B cell (primary cell): ENCODE measurements at regions of chr19 and their contacts with region 1.

Region 1: DNA sequence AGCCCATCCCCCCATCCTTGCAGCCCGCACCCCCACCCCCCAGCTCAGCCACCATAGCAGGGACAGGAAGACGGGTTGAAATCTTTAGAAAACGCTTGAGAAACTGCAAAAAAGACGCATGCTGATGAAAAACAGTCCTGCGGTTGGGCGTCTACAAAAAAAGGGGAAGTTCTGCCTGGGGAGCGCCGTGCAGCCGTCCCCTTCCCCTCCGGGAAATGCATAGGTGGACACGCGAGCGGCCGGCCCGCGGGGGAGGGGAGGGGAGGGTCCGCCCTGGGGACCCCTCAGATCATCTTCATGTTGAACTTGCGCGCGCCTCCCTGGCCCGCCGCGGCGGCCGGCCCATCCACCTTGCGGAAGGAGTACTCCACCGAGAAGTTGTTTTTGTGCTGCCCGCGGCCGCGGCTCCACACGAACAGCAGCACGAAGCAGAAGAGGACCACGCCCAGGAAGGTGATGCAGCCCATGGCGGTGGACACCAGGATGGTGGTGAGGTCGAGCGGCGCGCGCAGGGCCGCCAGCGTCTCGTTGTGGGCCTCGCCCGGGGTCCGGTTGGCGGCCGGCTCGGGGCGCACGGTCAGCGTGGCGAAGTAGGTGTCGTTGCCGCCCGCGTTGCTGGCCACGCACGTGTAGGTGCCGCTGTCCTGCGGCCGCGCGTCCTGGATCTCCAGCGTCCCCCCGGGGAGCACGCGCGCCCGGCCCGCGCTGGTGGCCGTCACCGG is 7.9 kb upstream of the PEAK3 start:
- DNase-seq: peak; percentile 92
- ATAC-seq: peak; percentile 69
- H3K4me3 ChIP-seq: peak overlapping the region; percentile 30 to 82 (median 71)
- H3K4me3 Mint-ChIP-seq: peak overlapping the region; percentile 97
- H3K27ac ChIP-seq: peak overlapping the region; percentile 75 to 81
- H3K27ac Mint-ChIP-seq: peak overlapping the region; percentile 87
- H3K4me1 ChIP-seq: peaks cover 46 to 62% of the 10 kb centered on the region in 2 donors
- H3K4me1 Mint-ChIP-seq: peaks cover 51% of the 10 kb centered on the region
- H3K27me3 ChIP-seq: no peaks in the 10 kb centered on the region
- H3K27me3 Mint-ChIP-seq: no peaks in the 10 kb centered on the region
- CTCF ChIP-seq: no peak

Region 2: GRCh38 chr19:2168619-2169424 is 121.1 kb before region 1 on chr19:
- CTCF ChIA-PET with region 1: no interaction called
- POLR2A ChIA-PET with region 1: interaction called, 13 read pairs
- intact Hi-C with region 1: no loop called
- DNase-seq: peak; percentile 81
- ATAC-seq: peak; percentile 44
- H3K4me3 ChIP-seq: peak overlapping the region; percentile 16 to 64 (median 37)
- H3K4me3 Mint-ChIP-seq: peak overlapping the region; percentile 88
- H3K27ac ChIP-seq: peak overlapping the region; percentile 90 to 95
- H3K27ac Mint-ChIP-seq: peak overlapping the region; percentile 95
- H3K4me1 ChIP-seq: peaks cover 66 to 88% of the 10 kb centered on the region in 2 donors
- H3K4me1 Mint-ChIP-seq: peaks cover 69% of the 10 kb centered on the region
- H3K27me3 ChIP-seq: no peaks in the 10 kb centered on the region
- H3K27me3 Mint-ChIP-seq: no peaks in the 10 kb centered on the region
- CTCF ChIP-seq: no peak

Region 3: DNA sequence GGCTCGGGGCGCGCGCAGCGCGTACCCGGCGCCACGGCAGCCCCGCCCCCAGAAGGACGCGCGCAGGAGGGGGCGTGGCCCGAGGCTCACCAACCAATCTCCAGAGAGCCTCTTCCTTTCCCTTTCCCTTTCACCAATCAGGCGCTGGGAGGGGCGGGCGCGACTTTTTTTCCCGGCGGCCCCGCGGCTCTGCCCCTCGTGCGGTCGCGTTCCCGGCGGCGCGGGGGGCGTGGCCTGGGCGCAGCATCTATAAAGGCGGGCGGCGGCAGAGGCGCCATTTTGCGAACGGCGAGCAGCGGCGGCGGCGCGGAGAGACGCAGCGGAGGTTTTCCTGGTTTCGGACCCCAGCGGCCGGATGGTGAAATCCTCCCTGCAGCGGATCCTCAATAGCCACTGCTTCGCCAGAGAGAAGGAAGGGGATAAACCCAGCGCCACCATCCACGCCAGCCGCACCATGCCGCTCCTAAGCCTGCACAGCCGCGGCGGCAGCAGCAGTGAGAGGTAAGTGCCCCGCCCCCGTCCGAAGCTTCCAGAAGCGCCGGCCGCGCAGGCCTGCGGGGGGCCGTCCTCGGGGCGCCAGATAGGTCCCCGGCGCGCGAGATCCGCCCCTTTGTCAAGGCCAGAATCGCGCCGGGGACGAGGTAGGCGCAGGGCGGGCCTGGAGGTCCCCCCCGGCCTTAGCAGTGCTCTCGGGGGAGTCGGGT is 20.5 kb before region 1 on chr19:
- CTCF ChIA-PET with region 1: interaction called, 26 read pairs
- POLR2A ChIA-PET with region 1: interaction called, 65 read pairs
- intact Hi-C with region 1: loop called (anchors 2 kb)
- DNase-seq: peak; percentile 99
- ATAC-seq: peak; percentile 66
- H3K4me3 ChIP-seq: peak overlapping the region; percentile 59 to 100 (median 99)
- H3K4me3 Mint-ChIP-seq: peak overlapping the region; percentile 89
- H3K27ac ChIP-seq: peak overlapping the region; percentile 79 to 94
- H3K27ac Mint-ChIP-seq: peak overlapping the region; percentile 97
- H3K4me1 ChIP-seq: peaks cover 56 to 66% of the 10 kb centered on the region in 2 donors
- H3K4me1 Mint-ChIP-seq: peaks cover 52% of the 10 kb centered on the region
- H3K27me3 ChIP-seq: no peaks in the 10 kb centered on the region
- H3K27me3 Mint-ChIP-seq: no peaks in the 10 kb centered on the region
- CTCF ChIP-seq: no peak

Region 4: GRCh38 chr19:2302319-2303210 is 12.7 kb after region 1 on chr19:
- CTCF ChIA-PET with region 1: interaction called, 5 read pairs
- POLR2A ChIA-PET with region 1: interaction called, 21 read pairs
- intact Hi-C with region 1: no loop called
- DNase-seq: peak; percentile 78
- ATAC-seq: peak; percentile 48
- H3K4me3 ChIP-seq: peak overlapping the region in 4 of 5 experiments; percentile 25 to 65 (median 43)
- H3K4me3 Mint-ChIP-seq: peak overlapping the region; percentile 87
- H3K27ac ChIP-seq: peak overlapping the region; percentile 64 to 78
- H3K27ac Mint-ChIP-seq: peak overlapping the region; percentile 86
- H3K4me1 ChIP-seq: peaks cover 45 to 66% of the 10 kb centered on the region in 2 donors
- H3K4me1 Mint-ChIP-seq: peaks cover 43% of the 10 kb centered on the region
- H3K27me3 ChIP-seq: peaks cover 0 to 18% (median 5%) of the 10 kb centered on the region in 4 experiments
- H3K27me3 Mint-ChIP-seq: peaks cover 4% of the 10 kb centered on the region
- CTCF ChIP-seq: no peak

Region 5: GRCh38 chr19:2328401-2329148 is 38.7 kb after region 1 on chr19 and contains the starts of genes LSM7 and SPPL2B:
- CTCF ChIA-PET with region 1: interaction called, 5 read pairs
- POLR2A ChIA-PET with region 1: interaction called, 12 read pairs
- intact Hi-C with region 1: loop called (anchors 1 kb)
- DNase-seq: peak; percentile 95
- ATAC-seq: peak; percentile 42
- H3K4me3 ChIP-seq: peak within 1 kb of the TSS; percentile 66 to 97 (median 92)
- H3K4me3 Mint-ChIP-seq: peak within 1 kb of the TSS; percentile 96
- H3K27ac ChIP-seq: peak within 1 kb of the TSS; percentile 71 to 90
- H3K27ac Mint-ChIP-seq: peak within 1 kb of the TSS; percentile 98
- H3K4me1 ChIP-seq: peaks cover 81 to 92% of the 10 kb centered on the region in 2 donors
- H3K4me1 Mint-ChIP-seq: peaks cover 81% of the 10 kb centered on the region
- H3K27me3 ChIP-seq: no peaks in the 10 kb centered on the region
- H3K27me3 Mint-ChIP-seq: no peaks in the 10 kb centered on the region
- CTCF ChIP-seq: no peak
- total RNA-seq, gene LSM7: 180 and 201 TPM in 2 replicates
- total RNA-seq, gene SPPL2B: 479 and 511 TPM in 2 replicates

Region 6: DNA sequence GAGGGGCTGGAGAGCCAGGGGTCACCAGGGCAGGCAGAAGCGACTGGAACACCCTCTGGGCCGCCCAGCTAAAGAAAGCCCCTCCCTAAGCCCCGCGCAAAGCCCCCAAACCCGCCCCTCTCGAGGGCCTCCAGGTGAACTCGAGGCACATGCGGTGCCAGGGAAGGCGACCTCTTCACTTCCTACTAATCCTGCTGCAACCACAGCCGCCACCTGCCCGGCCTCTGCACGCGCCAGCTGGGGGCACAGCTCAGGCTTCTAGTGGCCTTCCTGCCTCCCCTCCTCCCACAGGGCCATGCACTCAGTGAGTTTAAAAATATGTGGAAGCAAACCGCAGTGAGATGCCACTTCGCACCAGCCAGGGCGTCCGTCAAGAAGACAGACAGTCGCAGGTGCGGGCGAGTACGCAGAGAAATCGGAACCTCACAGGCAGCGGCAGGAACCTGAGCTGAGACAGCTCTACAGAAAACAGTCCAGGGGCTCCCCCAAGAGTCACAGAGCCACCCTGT is 156.4 kb after region 1 on chr19:
- CTCF ChIA-PET with region 1: no interaction called
- POLR2A ChIA-PET with region 1: no interaction called
- intact Hi-C with region 1: no loop called
- DNase-seq: peak; percentile 72
- ATAC-seq: peak; percentile 78
- H3K4me3 ChIP-seq: peak overlapping the region in 3 of 5 experiments; percentile 28 to 59 (median 32)
- H3K4me3 Mint-ChIP-seq: peak overlapping the region; percentile 88
- H3K27ac ChIP-seq: no peak overlapping the region
- H3K27ac Mint-ChIP-seq: peak overlapping the region; percentile 79
- H3K4me1 ChIP-seq: peaks cover 6 to 11% of the 10 kb centered on the region in 2 donors
- H3K4me1 Mint-ChIP-seq: peaks cover 12% of the 10 kb centered on the region
- H3K27me3 ChIP-seq: no peaks in the 10 kb centered on the region
- H3K27me3 Mint-ChIP-seq: no peaks in the 10 kb centered on the region
- CTCF ChIP-seq: no peak

Region 7: GRCh38 chr19:2750808-2751443 is 461.1 kb after region 1 on chr19:
- CTCF ChIA-PET with region 1: no interaction called
- POLR2A ChIA-PET with region 1: no interaction called
- intact Hi-C with region 1: no loop called
- DNase-seq: no peak
- ATAC-seq: no peak
- H3K4me3 ChIP-seq: no peak overlapping the region
- H3K4me3 Mint-ChIP-seq: no peak overlapping the region
- H3K27ac ChIP-seq: no peak overlapping the region
- H3K27ac Mint-ChIP-seq: no peak overlapping the region
- H3K4me1 ChIP-seq: peaks cover 8 to 18% of the 10 kb centered on the region in 2 donors
- H3K4me1 Mint-ChIP-seq: peaks cover 10% of the 10 kb centered on the region
- H3K27me3 ChIP-seq: no peaks in the 10 kb centered on the region
- H3K27me3 Mint-ChIP-seq: no peaks in the 10 kb centered on the region
- CTCF ChIP-seq: no peak